Posterior cingulate gyrus (tissue), 11 donors: ENCODE measurements at regions of chr15 and their contacts with region 1.

Region 1: DNA sequence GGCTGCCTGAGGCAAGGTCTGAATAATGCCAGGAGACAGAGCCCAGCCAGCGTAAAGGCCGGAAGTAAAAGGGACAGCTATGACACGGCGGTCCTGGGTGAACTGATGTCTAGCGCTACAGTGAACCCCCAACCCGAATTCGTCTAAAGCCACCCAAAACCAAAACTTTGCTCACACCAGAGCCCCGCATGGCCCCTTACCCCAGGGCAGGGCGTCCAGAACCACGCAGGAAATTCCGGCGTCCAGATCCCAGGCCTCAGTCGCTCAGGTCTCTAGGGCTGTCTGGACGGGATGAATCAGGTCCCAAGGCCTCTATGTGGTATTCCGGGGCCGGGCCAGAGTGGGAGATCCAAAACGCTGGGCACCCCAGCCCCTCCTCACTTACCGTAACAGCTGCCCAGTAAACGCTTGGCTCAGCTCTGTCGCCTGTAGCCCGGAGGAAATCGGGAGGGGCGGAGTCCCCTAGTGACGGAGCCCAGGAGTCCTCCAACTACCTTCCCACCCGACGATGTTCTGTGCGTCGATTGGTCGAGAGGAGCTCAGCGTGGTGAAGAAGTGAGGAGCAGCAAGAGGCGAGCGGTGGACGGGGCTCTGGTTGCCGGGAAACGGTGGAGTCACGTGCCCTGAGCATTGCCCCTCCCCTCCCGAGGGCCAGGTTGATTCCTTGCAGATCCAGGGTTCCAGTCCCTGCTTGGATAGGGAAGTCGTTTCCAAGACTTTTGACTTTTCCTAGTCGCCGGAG is at the start of gene CCDC32:
- DNase-seq: peak; percentile 98 to 100 (median 99)

Region 2: GRCh38 chr15:40440743-40441564 is 123.8 kb before region 1 on chr15 and contains the start of gene BAHD1:
- intact Hi-C with region 1: loop called (anchors 10 kb)
- DNase-seq: peak; percentile 97 to 100 (median 98)

Region 3: GRCh38 chr15:40506964-40507571 is 57.7 kb before region 1 on chr15:
- intact Hi-C with region 1: loop called (anchors 10 kb)
- DNase-seq: peak; percentile 44 to 95 (median 72)

Region 4: GRCh38 chr15:40593588-40594428 is 29.0 kb after region 1 on chr15 and contains the start of gene KNL1:
- intact Hi-C with region 1: loop called (anchors 1 kb)
- DNase-seq: peak; percentile 82 to 98 (median 92)

Region 5: GRCh38 chr15:40660686-40661085 is 95.9 kb after region 1 on chr15:
- intact Hi-C with region 1: no loop called
- DNase-seq: no peak

Region 6: GRCh38 chr15:40694688-40695468 is 130.1 kb after region 1 on chr15 and contains the start of gene RAD51:
- intact Hi-C with region 1: loop called (anchors 10 kb)
- DNase-seq: peak; percentile 81 to 99 (median 90)

Region 7: DNA sequence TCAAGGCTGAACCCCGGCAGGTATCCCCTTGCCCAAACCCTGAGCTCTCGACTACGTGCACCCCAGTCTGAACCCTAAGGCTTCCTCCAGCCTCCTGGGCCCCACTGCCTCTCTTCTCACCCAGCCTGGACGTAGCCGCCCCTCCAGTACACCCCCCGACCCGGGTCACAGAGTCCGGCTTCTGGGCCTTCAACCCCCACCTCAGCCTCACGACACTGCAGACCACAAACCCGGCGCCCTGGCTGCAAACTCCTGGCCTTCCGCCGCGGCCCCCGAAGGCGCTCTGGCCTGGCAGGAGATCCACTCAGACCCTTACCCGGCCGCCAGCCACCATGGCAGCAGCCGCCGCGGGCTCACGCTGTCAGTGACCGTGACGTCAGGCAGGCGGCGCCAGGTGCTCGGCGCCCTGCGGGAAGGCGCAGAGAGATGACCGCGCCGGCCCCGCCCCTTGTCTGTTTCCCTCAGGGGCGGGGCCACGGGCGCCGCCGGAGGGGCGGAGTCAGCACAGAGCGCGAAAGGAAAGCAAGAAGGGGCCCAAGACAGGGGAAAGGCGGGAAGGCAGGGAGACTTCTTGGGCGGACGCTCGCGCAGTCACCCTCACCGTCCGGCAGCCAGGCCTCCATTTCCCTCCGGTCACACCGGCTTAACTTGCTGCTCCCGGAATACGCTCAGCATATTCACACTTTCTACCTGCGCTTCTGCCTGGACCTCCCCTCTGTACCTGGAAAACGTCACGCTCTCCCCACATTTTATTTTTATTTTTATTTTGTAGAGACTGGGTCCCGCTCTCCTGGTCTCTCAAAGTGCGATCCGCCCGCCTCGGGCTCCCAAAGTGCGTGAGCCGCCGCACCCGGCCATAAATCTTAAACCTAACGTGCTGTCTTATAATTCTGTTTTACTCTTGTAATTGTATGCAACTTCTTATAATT is 190.4 kb after region 1 on chr15 and contains the start of gene RMDN3:
- intact Hi-C with region 1: loop called (anchors 10 kb)
- DNase-seq: peak; percentile 81 to 99 (median 90)

Region 8: DNA sequence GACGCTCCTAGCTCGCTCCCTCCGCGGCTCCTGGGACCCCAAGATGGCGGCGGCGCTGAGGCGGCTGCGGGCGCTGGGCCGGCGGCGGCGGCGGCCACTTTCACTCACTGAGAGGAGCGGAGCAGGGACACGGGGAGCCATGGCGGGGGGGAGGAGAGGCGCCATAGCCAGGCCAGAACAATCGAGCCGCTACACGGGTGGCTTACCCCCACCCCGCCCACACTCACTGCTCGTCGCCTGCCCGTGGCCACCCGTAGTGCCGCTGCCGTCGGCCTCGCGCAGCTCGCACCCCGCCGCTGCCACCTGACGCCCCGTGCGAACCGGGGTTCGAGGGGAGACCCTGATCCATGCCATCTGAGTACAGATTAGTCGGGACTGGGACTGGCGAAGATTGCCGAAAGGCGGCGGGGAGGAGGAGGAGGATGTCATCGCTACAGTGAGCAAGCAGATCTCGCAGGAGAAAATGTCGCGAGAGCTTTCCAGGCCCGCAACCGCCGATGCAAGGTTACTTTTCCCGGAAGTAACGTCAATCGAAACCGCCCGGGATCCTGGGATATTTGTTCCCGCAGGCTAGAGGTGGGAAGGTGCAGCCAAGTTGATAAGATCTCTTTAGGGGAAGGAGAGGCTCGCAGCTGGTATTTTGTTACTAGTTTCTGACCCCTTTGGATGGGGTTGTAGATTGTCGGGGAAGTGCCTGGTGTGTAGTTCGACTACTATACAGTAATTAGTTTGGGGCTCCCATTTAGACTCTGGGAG is 551.5 kb after region 1 on chr15 and contains the start of gene INO80:
- intact Hi-C with region 1: loop called (anchors 10 kb)
- DNase-seq: peak; percentile 91 to 99 (median 96)